ENCODE measurements at regions of chr12 and their contacts with region 1.

Region 1: GRCh38 chr12:7806863-7807487 is 17.8 kb downstream of the NANOG start:
- DNase-seq: peak; percentile 63

Region 2: GRCh38 chr12:7667125-7667524 is 139.8 kb before region 1 on chr12:
- CTCF ChIA-PET with region 1: interaction called, 11 read pairs
- POLR2A ChIA-PET with region 1: no interaction called
- DNase-seq: peak; percentile 27

Region 3: DNA sequence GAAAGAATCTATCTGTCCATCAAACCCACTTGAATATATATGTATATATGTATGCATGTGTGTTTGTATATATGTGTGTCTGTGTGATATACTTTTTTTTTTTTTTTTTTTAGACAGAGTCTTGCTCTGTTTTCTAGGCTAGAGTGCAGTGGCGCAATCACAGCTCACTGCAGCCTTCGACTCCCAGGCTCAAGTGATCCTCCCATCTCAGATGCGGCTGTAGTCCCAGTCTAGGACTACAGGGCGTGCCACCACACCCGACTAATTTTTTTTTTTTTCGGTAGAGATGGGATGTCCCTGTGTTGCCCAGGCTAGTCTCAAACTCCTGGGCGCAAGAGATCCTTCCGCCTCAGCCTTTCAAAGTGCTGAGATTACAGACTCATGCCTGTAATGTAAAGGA is 128.2 kb before region 1 on chr12:
- CTCF ChIA-PET with region 1: interaction called, 13 read pairs
- POLR2A ChIA-PET with region 1: no interaction called
- DNase-seq: no peak

Measured in HEK293T (cell line).